ENCODE measurements at regions of chr5 and their contacts with region 1.

Region 1: GRCh38 chr5:141524604-141525597 is 36.0 kb downstream of the PCDHGC5 start:
- DNase-seq: peak; percentile 88
- ATAC-seq: peak; percentile 74
- H3K4me3 ChIP-seq: no peak overlapping the region
- H3K27ac ChIP-seq: no peak overlapping the region
- H3K4me1 ChIP-seq: peaks cover 35 to 53% of the 10 kb centered on the region in 2 experiments
- H3K27me3 ChIP-seq: no peaks in the 10 kb centered on the region
- CTCF ChIP-seq: peak; percentile 99 to 100 (median 99)
- POLR2A ChIP-seq: no peak
- RAD21 ChIP-seq: peak; percentile 98

Region 2: DNA sequence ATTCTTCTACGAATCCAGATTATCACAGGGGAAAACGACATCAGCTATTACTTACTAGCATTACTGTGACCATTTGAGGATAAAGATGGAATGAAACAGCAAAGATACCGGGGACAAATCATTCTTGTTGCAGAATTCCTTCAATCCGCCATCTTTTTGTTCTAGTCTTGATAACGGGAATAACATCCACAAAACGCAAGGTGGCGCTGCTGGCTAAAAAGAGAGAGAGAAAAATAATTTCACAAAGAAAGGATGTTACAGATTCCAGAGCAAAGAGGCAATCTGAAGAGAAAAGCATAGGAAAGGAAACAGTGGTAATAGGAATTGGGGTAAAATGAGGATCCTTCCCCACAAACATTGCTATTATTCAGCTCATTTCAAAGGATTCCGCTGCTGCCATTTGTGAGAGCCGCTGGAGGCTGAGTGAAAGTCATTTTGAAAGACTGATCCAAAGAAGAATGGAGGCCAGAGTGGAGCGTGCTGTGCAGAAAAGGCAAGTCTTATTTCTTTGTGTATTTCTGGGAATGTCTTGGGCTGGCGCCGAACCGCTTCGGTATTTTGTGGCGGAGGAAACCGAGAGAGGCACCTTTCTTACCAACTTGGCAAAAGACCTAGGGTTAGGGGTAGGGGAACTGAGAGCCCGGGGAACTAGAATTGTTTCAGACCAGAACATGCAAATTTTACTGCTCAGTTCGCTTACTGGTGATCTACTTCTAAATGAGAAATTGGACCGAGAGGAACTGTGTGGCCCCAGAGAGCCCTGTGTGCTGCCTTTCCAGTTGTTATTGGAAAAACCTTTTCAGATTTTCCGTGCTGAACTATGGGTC is 352.3 kb before region 1 on chr5 and contains the start of gene PCDHB7:
- CTCF ChIA-PET with region 1: no interaction called
- POLR2A ChIA-PET with region 1: no interaction called
- RAD21 ChIA-PET with region 1: no interaction called
- intact Hi-C with region 1: no loop called
- DNase-seq: peak; percentile 19
- ATAC-seq: no peak
- H3K4me3 ChIP-seq: no peak within 1 kb of the TSS
- H3K27ac ChIP-seq: no peak within 1 kb of the TSS
- H3K4me1 ChIP-seq: no peaks in the 10 kb centered on the region
- H3K27me3 ChIP-seq: no peaks in the 10 kb centered on the region
- CTCF ChIP-seq: peak; percentile 40 to 71 (median 54); a peak in 5 of 6 replicates
- POLR2A ChIP-seq: no peak
- RAD21 ChIP-seq: peak; percentile 59
- total RNA-seq, gene PCDHB7: not detected

Region 3: DNA sequence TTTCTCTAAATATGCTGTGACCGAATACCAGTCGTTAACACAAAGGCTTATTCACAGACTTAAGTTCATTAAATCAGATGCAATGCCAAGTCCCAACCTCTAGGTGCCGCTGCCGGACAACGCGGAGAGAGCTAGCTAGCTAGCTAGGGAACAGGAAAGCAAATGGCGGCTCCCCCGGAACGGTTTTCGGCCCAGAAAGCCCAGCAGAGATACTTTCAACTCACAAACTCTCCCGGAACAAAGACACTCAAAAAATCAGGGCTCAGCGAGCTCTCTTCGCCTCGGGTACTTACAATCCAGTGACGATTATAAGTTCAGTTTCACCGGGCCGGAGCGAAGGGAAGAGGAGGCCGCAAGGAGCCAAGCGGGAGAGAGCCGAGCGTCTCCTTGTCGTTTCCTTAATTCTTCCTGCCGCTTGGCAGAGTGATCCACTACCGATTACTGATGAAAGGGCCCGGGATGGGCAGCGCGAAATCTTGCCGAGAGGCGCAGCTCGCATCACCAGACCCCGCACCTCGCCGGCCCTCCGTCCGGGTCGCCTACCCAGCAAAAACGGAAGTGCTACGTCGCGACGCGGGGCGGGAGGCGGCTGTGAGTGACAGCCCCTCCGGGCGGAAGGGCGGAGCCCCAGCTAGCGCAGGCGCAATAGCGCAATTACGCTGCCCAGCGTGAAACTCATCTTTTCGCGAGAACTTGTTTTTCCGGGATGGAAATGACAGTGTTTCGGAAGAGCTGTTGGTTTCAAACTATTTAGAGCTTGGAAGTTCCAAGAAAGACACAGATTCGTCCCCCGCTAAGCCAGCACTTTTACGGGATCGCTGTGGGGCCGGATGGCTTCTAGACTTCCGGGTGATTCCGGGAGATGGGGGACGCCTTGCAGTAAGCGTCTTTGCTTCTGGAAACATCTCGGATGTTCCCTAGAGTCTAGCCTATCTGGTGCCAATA is 204.4 kb before region 1 on chr5 and contains the start of gene TAF7:
- CTCF ChIA-PET with region 1: interaction called, 7 read pairs
- POLR2A ChIA-PET with region 1: interaction called, 11 read pairs
- RAD21 ChIA-PET with region 1: no interaction called
- intact Hi-C with region 1: loop called (anchors 2 kb)
- DNase-seq: peak; percentile 89
- ATAC-seq: peak; percentile 91
- H3K4me3 ChIP-seq: peak within 1 kb of the TSS; percentile 70 to 74
- H3K27ac ChIP-seq: peak within 1 kb of the TSS; percentile 89
- H3K4me1 ChIP-seq: peaks cover 4 to 13% of the 10 kb centered on the region in 2 experiments; a peak in 3 of 4 replicates
- H3K27me3 ChIP-seq: no peaks in the 10 kb centered on the region
- CTCF ChIP-seq: peak; percentile 60 to 91 (median 84)
- POLR2A ChIP-seq: peak; percentile 94
- RAD21 ChIP-seq: peak; percentile 49
- total RNA-seq, gene TAF7: 40.9 TPM

Region 4: GRCh38 chr5:141412854-141413539 is 111.9 kb before region 1 on chr5 and contains the start of gene PCDHGA10:
- CTCF ChIA-PET with region 1: interaction called, 37 read pairs
- POLR2A ChIA-PET with region 1: interaction called, 4 read pairs
- RAD21 ChIA-PET with region 1: interaction called, 5 to 17 read pairs
- intact Hi-C with region 1: loop called (anchors 1 kb)
- DNase-seq: peak; percentile 71
- ATAC-seq: peak; percentile 89
- H3K4me3 ChIP-seq: peak within 1 kb of the TSS; percentile 46 to 61
- H3K27ac ChIP-seq: peak within 1 kb of the TSS; percentile 44
- H3K4me1 ChIP-seq: peaks cover 2 to 5% of the 10 kb centered on the region in 2 experiments; a peak in 1 of 4 replicates
- H3K27me3 ChIP-seq: no peaks in the 10 kb centered on the region
- CTCF ChIP-seq: peak; percentile 84 to 96 (median 86)
- POLR2A ChIP-seq: no peak
- RAD21 ChIP-seq: peak; percentile 94
- total RNA-seq, gene PCDHGA10: 3.8 TPM

Region 5: DNA sequence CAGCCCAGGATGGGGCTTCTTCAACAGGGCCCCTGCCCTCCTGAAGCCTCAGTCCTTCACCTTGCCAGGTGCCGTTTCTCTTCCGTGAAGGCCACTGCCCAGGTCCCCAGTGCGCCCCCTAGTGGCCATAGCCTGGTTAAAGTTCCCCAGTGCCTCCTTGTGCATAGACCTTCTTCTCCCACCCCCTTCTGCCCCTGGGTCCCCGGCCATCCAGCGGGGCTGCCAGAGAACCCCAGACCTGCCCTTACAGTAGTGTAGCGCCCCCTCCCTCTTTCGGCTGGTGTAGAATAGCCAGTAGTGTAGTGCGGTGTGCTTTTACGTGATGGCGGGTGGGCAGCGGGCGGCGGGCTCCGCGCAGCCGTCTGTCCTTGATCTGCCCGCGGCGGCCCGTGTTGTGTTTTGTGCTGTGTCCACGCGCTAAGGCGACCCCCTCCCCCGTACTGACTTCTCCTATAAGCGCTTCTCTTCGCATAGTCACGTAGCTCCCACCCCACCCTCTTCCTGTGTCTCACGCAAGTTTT is 12.5 kb before region 1 on chr5:
- CTCF ChIA-PET with region 1: interaction called, 15 read pairs
- POLR2A ChIA-PET with region 1: interaction called, 3 read pairs
- RAD21 ChIA-PET with region 1: no interaction called
- intact Hi-C with region 1: no loop called
- DNase-seq: peak; percentile 32
- ATAC-seq: peak; percentile 80
- H3K4me3 ChIP-seq: no peak overlapping the region
- H3K27ac ChIP-seq: no peak overlapping the region
- H3K4me1 ChIP-seq: peaks cover 0 to 9% of the 10 kb centered on the region in 2 experiments; a peak in 2 of 4 replicates
- H3K27me3 ChIP-seq: no peaks in the 10 kb centered on the region
- CTCF ChIP-seq: peak; percentile 56 to 90 (median 80); a peak in 5 of 6 replicates
- POLR2A ChIP-seq: no peak
- RAD21 ChIP-seq: peak; percentile 49